ENCODE measurements at regions of chr1 and their contacts with region 1.

Region 1: DNA sequence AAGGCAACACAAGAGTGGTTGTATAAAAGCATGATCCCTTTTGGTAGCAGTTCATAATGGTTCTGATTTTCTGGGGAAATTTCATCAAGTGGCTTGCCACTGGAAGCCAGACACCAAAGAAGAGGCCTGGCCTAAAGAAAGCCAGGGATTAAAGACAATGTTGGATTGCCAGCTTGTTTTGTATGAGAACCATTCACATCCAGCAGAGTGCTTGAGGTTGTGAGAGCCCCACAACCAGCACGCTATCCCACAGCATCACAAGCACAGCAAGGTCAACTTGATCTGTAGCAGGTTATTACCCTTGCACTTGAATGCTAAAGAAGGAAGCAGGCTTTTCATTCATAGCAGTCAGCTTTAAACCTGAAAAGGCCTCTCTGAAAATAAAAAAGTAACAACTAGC is 399.8 kb downstream of the PLPP3 start:
- DNase-seq: no peak
- H3K4me3 ChIP-seq: no peak overlapping the region
- H3K27ac ChIP-seq: no peak overlapping the region
- H3K4me1 ChIP-seq: peaks cover 0 to 17% (median 4%) of the 10 kb centered on the region in 4 donors
- H3K27me3 ChIP-seq: no peaks in the 10 kb centered on the region
- CTCF ChIP-seq: no peak
- EP300 ChIP-seq: no peak
- POLR2A ChIP-seq: no peak

Region 2: GRCh38 chr1:55777545-55777944 is 402.0 kb before region 1 on chr1:
- in situ Hi-C with region 1: no loop called
- intact Hi-C with region 1: loop called (anchors 2 kb)
- DNase-seq: no peak
- H3K4me3 ChIP-seq: no peak overlapping the region
- H3K27ac ChIP-seq: no peak overlapping the region
- H3K4me1 ChIP-seq: peaks cover 3 to 6% (median 4%) of the 10 kb centered on the region in 4 donors
- H3K27me3 ChIP-seq: no peaks in the 10 kb centered on the region
- CTCF ChIP-seq: no peak
- EP300 ChIP-seq: no peak
- POLR2A ChIP-seq: no peak

Measured in transverse colon (tissue), 4 donors.